Vagina (tissue), 2 donors: ENCODE measurements at regions of chr5 and their contacts with region 1.

Region 1: GRCh38 chr5:174424219-174425053 is 299.9 kb upstream of the MSX2 start:
- DNase-seq: peak in 1 of 2 donors; percentile 34
- H3K4me3 ChIP-seq: no peak overlapping the region
- H3K27ac ChIP-seq: no peak overlapping the region
- H3K4me1 ChIP-seq: peaks cover 13% of the 10 kb centered on the region
- H3K27me3 ChIP-seq: no peaks in the 10 kb centered on the region
- CTCF ChIP-seq: no peak
- POLR2A ChIP-seq: no peak

Region 2: DNA sequence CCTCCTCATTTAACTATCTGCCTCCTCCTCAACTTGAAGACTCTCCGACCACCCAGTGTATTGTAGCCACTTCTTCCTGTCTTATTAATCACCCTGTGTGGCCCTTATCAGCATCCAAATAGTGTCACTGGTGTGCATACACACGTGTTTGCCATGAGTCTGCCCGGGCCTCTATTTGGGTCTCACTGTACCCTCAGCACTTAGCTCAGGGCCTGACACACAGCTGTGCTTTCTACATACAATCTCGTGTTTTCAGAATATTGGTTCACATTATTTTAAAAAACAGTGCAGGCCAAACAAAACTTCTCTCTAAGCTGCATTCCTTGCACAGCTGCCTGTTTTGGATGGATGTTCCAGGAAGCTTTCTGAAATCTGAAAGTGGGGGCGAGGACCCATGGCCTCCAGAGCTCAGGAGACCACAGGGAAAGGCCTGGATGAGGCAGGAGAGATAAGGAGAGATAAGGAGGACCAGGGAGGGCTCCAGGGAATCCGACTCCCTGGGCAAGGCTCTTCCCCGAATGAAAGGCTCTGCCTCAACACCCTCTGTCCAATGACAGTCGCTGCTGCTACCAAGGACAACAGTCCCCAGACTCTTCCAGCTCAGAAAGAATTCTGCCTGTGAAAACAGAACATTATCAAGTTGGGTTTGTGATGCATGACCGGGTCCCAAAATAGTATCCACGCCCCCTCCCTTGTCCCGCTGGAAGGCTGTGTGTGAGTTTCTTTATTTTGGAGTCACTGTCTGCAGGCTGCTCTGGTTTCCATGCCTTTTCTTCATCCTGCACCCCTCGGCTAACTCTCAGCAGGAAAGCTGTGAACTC is 123.3 kb before region 1 on chr5:
- intact Hi-C with region 1: no loop called
- DNase-seq: peak; percentile 40 to 43
- H3K4me3 ChIP-seq: no peak overlapping the region
- H3K27ac ChIP-seq: no peak overlapping the region
- H3K4me1 ChIP-seq: no peaks in the 10 kb centered on the region
- H3K27me3 ChIP-seq: no peaks in the 10 kb centered on the region
- CTCF ChIP-seq: no peak
- POLR2A ChIP-seq: no peak

Region 3: GRCh38 chr5:174311531-174312269 is 112.7 kb before region 1 on chr5:
- intact Hi-C with region 1: no loop called
- DNase-seq: peak in 1 of 2 donors; percentile 64
- H3K4me3 ChIP-seq: peak overlapping the region; percentile 27 to 40
- H3K27ac ChIP-seq: no peak overlapping the region
- H3K4me1 ChIP-seq: peaks cover 10% of the 10 kb centered on the region
- H3K27me3 ChIP-seq: no peaks in the 10 kb centered on the region
- CTCF ChIP-seq: peak; percentile 43 to 83 (median 58)
- POLR2A ChIP-seq: no peak

Region 4: DNA sequence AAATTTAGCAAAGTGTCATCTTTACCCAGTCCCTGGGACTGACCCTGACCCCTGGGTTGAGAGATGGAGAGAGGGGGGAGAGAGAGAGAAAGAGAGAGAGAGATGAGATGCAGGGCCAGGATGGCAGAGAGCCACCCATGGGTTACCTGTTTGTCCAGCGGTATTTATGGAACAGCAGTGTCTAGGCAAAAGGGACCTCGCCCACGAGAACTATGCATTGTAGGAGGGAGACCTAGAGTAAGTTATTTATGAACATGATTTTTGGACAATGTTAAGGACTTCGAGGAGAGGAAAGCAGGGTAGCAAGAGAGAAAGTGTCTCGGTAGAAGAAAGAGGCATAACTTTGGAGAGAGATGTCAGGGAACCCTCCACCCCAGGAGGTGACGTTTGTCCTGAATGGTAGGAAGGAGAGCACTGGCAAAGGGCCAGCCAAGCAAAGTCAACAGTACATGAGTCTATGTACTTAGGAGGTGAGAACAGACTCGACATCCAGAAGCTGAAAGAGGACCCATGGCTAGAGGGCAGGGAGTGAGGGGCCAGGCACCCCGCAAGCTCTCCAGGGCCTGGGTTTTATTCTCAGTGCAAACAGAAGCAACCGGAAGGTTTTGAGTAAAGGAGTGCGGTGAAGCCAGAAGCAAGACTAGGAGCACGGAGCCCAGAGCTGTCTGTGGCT is 269.4 kb after region 1 on chr5:
- intact Hi-C with region 1: no loop called
- DNase-seq: no peak
- H3K4me3 ChIP-seq: no peak overlapping the region
- H3K27ac ChIP-seq: no peak overlapping the region
- H3K4me1 ChIP-seq: no peaks in the 10 kb centered on the region
- H3K27me3 ChIP-seq: peaks cover 4% of the 10 kb centered on the region
- CTCF ChIP-seq: no peak
- POLR2A ChIP-seq: no peak

Region 5: DNA sequence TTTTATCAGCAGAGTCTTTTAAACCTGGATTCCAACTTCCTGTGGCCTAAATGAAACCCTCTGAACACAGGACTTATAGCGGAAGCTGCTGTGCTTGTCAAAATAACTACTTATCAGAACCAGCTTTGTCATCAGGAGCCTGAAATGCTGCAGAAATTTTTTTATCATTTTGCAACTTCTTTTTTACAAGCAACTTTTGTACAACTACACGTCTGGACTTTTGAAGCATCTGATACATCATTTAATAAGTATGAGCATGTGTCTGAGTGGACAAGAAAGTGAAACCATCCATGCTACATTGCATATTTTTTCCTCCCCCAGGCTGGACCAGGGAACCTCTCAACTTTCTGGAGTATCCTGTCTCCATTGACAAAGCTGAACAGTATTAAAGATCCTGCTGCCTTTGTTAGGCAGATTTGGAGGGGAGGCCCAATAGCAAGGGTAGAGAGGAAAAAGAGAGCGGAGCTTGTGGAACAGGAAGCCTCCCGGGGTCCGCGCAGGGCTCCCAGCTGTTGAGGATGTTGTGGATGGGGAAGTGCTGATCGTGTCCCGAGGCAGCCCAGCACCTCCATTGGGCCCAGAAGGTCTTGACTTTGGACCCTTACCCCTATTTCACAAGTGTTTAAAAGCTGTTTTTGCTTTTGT is 496.6 kb after region 1 on chr5:
- intact Hi-C with region 1: no loop called
- DNase-seq: no peak
- H3K4me3 ChIP-seq: no peak overlapping the region
- H3K27ac ChIP-seq: no peak overlapping the region
- H3K4me1 ChIP-seq: no peaks in the 10 kb centered on the region
- H3K27me3 ChIP-seq: no peaks in the 10 kb centered on the region
- CTCF ChIP-seq: no peak
- POLR2A ChIP-seq: no peak

Region 6: DNA sequence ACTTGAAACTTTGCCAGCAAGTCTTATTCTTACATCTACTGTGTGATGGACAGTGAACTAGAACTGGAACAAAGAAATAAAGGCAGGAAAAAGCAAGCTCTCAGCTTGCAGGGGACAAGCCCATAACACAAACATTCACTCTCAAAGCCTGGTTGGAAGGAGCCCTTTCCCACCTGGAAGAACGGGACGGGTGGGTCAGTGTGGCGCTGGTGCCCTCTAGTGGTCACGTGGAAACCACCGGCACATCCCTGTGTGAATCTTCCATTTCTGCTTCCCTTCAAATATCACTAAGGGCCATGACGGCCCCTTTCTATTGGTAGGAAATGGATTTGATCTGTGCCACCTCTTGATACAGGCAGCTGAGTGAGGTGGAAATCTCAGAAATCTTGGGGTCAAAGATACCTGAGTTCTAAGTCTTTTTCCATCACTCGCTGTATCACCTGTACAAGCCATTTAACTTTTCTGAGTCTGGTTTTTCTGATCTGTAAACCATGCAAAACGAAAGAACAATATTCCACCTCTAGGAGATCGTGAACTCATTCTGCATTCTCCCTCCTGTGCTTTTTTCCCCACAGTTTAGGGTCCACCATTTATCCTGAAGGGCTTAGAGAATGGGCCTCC is 511.5 kb after region 1 on chr5:
- intact Hi-C with region 1: loop called (anchors 10 kb)
- DNase-seq: no peak
- H3K4me3 ChIP-seq: no peak overlapping the region
- H3K27ac ChIP-seq: no peak overlapping the region
- H3K4me1 ChIP-seq: no peaks in the 10 kb centered on the region
- H3K27me3 ChIP-seq: no peaks in the 10 kb centered on the region
- CTCF ChIP-seq: peak; percentile 20 to 82 (median 63)
- POLR2A ChIP-seq: no peak